CD4-positive, alpha-beta memory T cell (primary cell): ENCODE measurements at regions of chr3 and their contacts with region 1.

Region 1: DNA sequence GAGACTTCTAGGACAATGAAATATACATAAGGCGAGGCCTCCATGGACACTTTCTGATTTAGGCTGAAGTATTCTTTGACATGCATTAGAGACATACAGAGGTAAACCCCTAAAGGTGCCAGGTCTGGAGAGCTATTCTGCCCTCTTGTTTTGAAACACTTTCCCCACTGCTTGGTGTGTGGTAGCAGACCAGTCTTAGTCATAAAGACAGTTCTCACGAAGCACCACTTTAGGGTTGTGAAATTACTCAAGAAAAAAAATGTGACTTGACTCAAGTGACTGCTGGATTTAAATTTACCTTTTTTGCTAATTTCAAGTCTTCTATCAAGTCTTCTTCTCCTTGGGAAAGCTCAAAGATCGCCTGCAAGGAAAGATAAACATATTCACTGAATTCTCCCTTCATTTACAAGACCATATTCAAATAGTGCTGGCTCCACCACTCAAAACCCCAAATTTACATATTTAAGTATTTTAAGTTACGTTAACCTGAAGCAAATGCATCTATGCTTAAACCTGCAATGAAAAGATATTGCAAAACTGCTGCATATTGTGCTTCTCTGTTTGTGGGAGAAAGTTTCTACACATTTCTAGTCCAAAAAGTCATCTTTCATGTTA is 48.4 kb downstream of the ARHGEF3 start:
- DNase-seq: peak in 1 of 5 donors; percentile 33
- H3K4me3 ChIP-seq: no peak overlapping the region
- H3K4me3 Mint-ChIP-seq: peak overlapping the region in 6 of 8 donors; percentile 1 to 96 (median 76)
- H3K27ac ChIP-seq: peak overlapping the region; percentile 22
- H3K27ac Mint-ChIP-seq: peak overlapping the region; percentile 42 to 97 (median 76)
- H3K4me1 ChIP-seq: peaks cover 62% of the 10 kb centered on the region
- H3K4me1 Mint-ChIP-seq: peaks cover 43 to 68% (median 54%) of the 10 kb centered on the region in 4 donors
- H3K27me3 ChIP-seq: no peaks in the 10 kb centered on the region
- H3K27me3 Mint-ChIP-seq: no peaks in the 10 kb centered on the region

Region 2: DNA sequence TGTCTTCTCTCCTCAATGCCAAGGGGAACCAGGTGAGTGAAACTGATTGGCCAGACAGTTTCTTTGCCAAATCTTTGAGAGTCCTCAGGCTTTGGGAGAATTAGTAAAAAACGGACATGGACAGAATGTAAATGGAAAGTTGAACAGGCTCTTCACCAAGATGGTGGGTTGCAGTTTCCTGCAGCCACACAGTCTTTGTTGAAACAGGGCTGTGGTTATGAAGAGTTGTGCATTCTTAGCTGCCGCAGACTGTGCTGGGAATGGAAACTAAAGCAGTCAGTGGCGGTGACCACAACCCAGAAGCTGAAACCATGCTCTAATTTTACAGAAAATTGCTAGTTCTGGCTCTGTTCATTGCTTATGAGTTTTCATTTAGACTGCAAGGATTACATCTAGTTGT is 28.1 kb before region 1 on chr3:
- CTCF ChIA-PET with region 1: interaction called, 4 read pairs
- POLR2A ChIA-PET with region 1: interaction called, 10 read pairs
- intact Hi-C with region 1: no loop called
- DNase-seq: peak; percentile 48 to 71 (median 65)
- H3K4me3 ChIP-seq: no peak overlapping the region
- H3K4me3 Mint-ChIP-seq: peak overlapping the region; percentile 37 to 92 (median 70)
- H3K27ac ChIP-seq: peak overlapping the region; percentile 4
- H3K27ac Mint-ChIP-seq: peak overlapping the region; percentile 25 to 96 (median 79)
- H3K4me1 ChIP-seq: peaks cover 27% of the 10 kb centered on the region
- H3K4me1 Mint-ChIP-seq: peaks cover 30 to 62% (median 46%) of the 10 kb centered on the region in 4 donors
- H3K27me3 ChIP-seq: no peaks in the 10 kb centered on the region
- H3K27me3 Mint-ChIP-seq: no peaks in the 10 kb centered on the region